Activated naive CD4-positive, alpha-beta T cell treated with anti-CD3 and anti-CD28 coated beads for 36 hours (primary cell): ENCODE measurements at regions of chr12 and their contacts with region 1.

Region 1: GRCh38 chr12:49018261-49019119 is at the start of gene PRKAG1:
- DNase-seq: peak; percentile 96
- H3K4me3 Mint-ChIP-seq: peak within 1 kb of the TSS; percentile 87
- H3K27ac Mint-ChIP-seq: peak within 1 kb of the TSS; percentile 94
- H3K4me1 Mint-ChIP-seq: peaks cover 36% of the 10 kb centered on the region
- H3K27me3 Mint-ChIP-seq: no peaks in the 10 kb centered on the region
- total RNA-seq, gene PRKAG1: 49.4 to 50.9 TPM

Region 2: GRCh38 chr12:48977315-48978281 is 40.9 kb before region 1 on chr12:
- CTCF ChIA-PET with region 1: interaction called, 6 read pairs
- intact Hi-C with region 1: loop called (anchors 1 kb)
- DNase-seq: peak; percentile 83
- H3K4me3 Mint-ChIP-seq: peak overlapping the region; percentile 19
- H3K27ac Mint-ChIP-seq: no peak overlapping the region
- H3K4me1 Mint-ChIP-seq: peaks cover 44% of the 10 kb centered on the region
- H3K27me3 Mint-ChIP-seq: peaks cover 67% of the 10 kb centered on the region

Region 3: GRCh38 chr12:49043856-49044258 is 25.4 kb after region 1 on chr12:
- CTCF ChIA-PET with region 1: interaction called, 10 read pairs
- intact Hi-C with region 1: no loop called
- DNase-seq: peak; percentile 85
- H3K4me3 Mint-ChIP-seq: no peak overlapping the region
- H3K27ac Mint-ChIP-seq: no peak overlapping the region
- H3K4me1 Mint-ChIP-seq: peaks cover 2% of the 10 kb centered on the region
- H3K27me3 Mint-ChIP-seq: no peaks in the 10 kb centered on the region

Region 4: GRCh38 chr12:49110464-49111155 is 92.1 kb after region 1 on chr12 and contains the start of gene LMBR1L:
- CTCF ChIA-PET with region 1: no interaction called
- intact Hi-C with region 1: loop called (anchors 1 kb)
- DNase-seq: peak; percentile 98
- H3K4me3 Mint-ChIP-seq: peak within 1 kb of the TSS; percentile 93
- H3K27ac Mint-ChIP-seq: peak within 1 kb of the TSS; percentile 94
- H3K4me1 Mint-ChIP-seq: peaks cover 37% of the 10 kb centered on the region
- H3K27me3 Mint-ChIP-seq: no peaks in the 10 kb centered on the region
- total RNA-seq, gene LMBR1L: 60.1 to 66.8 TPM

Region 5: DNA sequence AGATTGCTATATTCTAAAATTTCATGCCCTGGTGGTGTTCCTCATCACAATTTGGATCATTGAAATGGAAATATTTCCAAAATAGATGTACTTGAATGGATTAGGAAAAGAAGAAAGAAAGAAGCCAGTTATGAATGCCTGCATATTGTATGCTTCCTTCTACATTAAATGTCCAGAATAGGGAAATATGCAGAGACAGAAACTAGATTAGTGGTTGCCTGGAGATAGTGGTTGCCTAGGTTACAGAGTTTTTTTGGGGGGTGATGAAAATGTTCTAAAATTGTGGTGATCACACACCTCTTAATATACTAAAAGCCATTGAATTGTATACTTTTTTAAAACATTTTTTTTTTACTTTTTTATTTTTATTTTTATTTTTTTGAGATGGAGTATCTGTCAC is 152.4 kb after region 1 on chr12:
- CTCF ChIA-PET with region 1: no interaction called
- intact Hi-C with region 1: no loop called
- DNase-seq: no peak
- H3K4me3 Mint-ChIP-seq: no peak overlapping the region
- H3K27ac Mint-ChIP-seq: no peak overlapping the region
- H3K4me1 Mint-ChIP-seq: no peaks in the 10 kb centered on the region
- H3K27me3 Mint-ChIP-seq: no peaks in the 10 kb centered on the region

Region 6: DNA sequence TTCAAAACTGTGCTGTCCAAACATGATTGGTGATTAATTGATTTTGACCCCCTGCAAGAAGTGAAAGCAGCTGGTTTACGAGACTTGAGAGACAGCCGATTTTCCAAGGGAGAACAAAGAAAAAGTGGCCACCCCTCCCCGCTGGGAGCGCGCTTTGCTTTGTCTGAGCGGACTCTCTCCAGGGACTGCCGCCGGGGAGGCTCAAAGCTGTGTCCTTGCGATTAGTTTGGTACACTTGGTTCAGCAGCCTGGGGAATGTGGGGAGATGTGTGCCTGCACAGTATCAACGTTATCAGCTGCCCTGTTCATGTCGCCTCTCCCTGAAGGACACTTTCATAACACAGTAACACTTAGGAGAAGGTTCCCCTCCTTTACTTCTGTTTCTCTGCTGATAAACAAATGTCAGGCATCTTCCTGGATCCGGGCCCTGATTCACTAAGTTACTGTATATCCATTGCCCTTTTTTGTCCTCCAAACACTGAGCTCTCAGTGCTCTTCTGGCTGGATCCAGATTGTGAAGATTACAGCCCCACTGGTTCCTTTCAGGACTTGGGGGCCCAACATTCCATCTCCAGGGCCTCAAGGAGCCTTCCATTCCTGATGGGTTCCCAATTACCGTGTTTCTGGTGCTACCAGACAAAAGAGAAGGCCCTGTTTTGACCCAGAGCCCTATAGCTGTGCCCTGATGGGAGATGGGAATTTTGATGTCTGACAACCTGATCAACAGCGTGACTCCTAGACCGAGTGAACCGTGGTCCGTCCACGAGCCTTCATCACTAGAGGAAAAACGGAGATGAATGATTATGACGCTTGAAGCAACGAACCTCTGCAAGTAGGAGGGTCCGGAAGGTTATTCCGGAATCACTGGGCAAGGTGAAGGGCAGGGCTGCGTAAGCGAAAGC is 214.7 kb after region 1 on chr12:
- CTCF ChIA-PET with region 1: interaction called, 4 read pairs
- intact Hi-C with region 1: loop called (anchors 1 kb)
- DNase-seq: no peak
- H3K4me3 Mint-ChIP-seq: peak overlapping the region; percentile 85
- H3K27ac Mint-ChIP-seq: peak overlapping the region; percentile 81
- H3K4me1 Mint-ChIP-seq: peaks cover 12% of the 10 kb centered on the region
- H3K27me3 Mint-ChIP-seq: no peaks in the 10 kb centered on the region

Region 7: GRCh38 chr12:49489720-49490119 is 471.2 kb after region 1 on chr12:
- CTCF ChIA-PET with region 1: no interaction called
- intact Hi-C with region 1: no loop called
- DNase-seq: no peak
- H3K4me3 Mint-ChIP-seq: no peak overlapping the region
- H3K27ac Mint-ChIP-seq: no peak overlapping the region
- H3K4me1 Mint-ChIP-seq: no peaks in the 10 kb centered on the region
- H3K27me3 Mint-ChIP-seq: no peaks in the 10 kb centered on the region